ENCODE measurements at regions of chr3 and their contacts with region 1.

Region 1: GRCh38 chr3:47420511-47421484 is 40.0 kb downstream of the PTPN23 start:
- DNase-seq: peak; percentile 82
- H3K4me3 ChIP-seq: no peak overlapping the region
- H3K27ac ChIP-seq: peak overlapping the region; percentile 60 to 61
- H3K4me1 ChIP-seq: peaks cover 5% of the 10 kb centered on the region
- H3K27me3 ChIP-seq: no peaks in the 10 kb centered on the region
- CTCF ChIP-seq: peak; percentile 85 to 98 (median 96)
- POLR2A ChIP-seq: no peak

Region 2: GRCh38 chr3:47475570-47476329 is 55.0 kb after region 1 on chr3 and contains the start of gene SCAP:
- intact Hi-C with region 1: loop called (anchors 1 kb)
- DNase-seq: peak; percentile 88
- H3K4me3 ChIP-seq: peak within 1 kb of the TSS; percentile 85 to 99
- H3K27ac ChIP-seq: peak within 1 kb of the TSS; percentile 69 to 74
- H3K4me1 ChIP-seq: no peaks in the 10 kb centered on the region
- H3K27me3 ChIP-seq: no peaks in the 10 kb centered on the region
- CTCF ChIP-seq: peak; percentile 98 to 99 (median 98)
- POLR2A ChIP-seq: peak; percentile 45
- total RNA-seq, gene SCAP: 71.5 to 230 TPM

Region 3: GRCh38 chr3:47781685-47782445 is 361.1 kb after region 1 on chr3 and contains the start of gene SMARCC1:
- intact Hi-C with region 1: loop called (anchors 10 kb)
- DNase-seq: peak; percentile 96
- H3K4me3 ChIP-seq: peak within 1 kb of the TSS; percentile 99 to 100
- H3K27ac ChIP-seq: peak within 1 kb of the TSS; percentile 97 to 99
- H3K4me1 ChIP-seq: no peaks in the 10 kb centered on the region
- H3K27me3 ChIP-seq: no peaks in the 10 kb centered on the region
- CTCF ChIP-seq: peak in 2 of 4 experiments; percentile 37 to 59
- POLR2A ChIP-seq: peak; percentile 91
- total RNA-seq, gene SMARCC1: 49.9 to 58.7 TPM